ENCODE measurements at regions of chr1 and their contacts with region 1.

Region 1: GRCh38 chr1:31564134-31564989 is 12.0 kb upstream of the TINAGL1 start:
- DNase-seq: no peak
- H3K4me3 ChIP-seq: no peak overlapping the region
- CTCF ChIP-seq: peak; percentile 80

Region 2: GRCh38 chr1:31531177-31531999 is 33.0 kb before region 1 on chr1:
- CTCF ChIA-PET with region 1: interaction called, 12 read pairs
- POLR2A ChIA-PET with region 1: no interaction called
- DNase-seq: no peak
- H3K4me3 ChIP-seq: no peak overlapping the region
- CTCF ChIP-seq: no peak

Region 3: DNA sequence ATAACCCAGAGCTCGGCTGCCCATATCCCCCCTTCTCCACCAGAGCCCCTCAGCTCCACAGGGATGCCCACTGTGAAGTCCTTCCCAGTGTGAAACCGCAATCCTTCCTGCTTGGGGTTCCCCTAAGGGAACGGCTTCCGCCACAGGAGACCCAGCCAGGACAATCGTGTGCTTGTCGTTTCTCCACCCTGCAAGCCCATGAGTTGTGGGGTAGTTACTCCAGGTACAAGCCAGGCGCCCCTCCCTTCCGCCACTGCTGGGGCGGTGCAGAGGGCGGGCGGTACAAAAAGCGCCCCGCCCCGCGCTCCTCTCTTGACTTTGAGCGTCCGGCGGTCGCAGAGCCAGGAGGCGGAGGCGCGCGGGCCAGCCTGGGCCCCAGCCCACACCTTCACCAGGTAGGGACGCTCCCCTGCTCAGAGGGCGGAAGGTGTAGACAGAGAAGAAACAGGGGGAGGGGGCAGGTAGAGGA is 11.9 kb after region 1 on chr1 and contains the start of gene TINAGL1:
- CTCF ChIA-PET with region 1: interaction called, 34 read pairs
- POLR2A ChIA-PET with region 1: no interaction called
- DNase-seq: no peak
- H3K4me3 ChIP-seq: peak within 1 kb of the TSS; percentile 47
- CTCF ChIP-seq: no peak

Region 4: GRCh38 chr1:31593770-31594632 is 29.6 kb after region 1 on chr1:
- CTCF ChIA-PET with region 1: interaction called, 327 read pairs
- POLR2A ChIA-PET with region 1: no interaction called
- DNase-seq: no peak
- H3K4me3 ChIP-seq: no peak overlapping the region
- CTCF ChIP-seq: peak; percentile 97

Region 5: GRCh38 chr1:31617917-31618660 is 53.7 kb after region 1 on chr1:
- CTCF ChIA-PET with region 1: interaction called, 52 read pairs
- POLR2A ChIA-PET with region 1: no interaction called
- DNase-seq: no peak
- H3K4me3 ChIP-seq: peak overlapping the region; percentile 54
- CTCF ChIP-seq: peak; percentile 87